Activated T-helper 1 cell treated with anti-CD3 and anti-CD28 coated beads, Interleukin-12 subunit alpha, Interleukin-12 subunit beta, Interleukin-2, Interleukin-4 antibody, amounts not matched to agents 30 ng/mL and 10 ng/mL and 1 ng/mL, durations not matched to agents 14 hours and 24 hours and 36 hours (primary cell): ENCODE measurements at regions of chr1 and their contacts with region 1.

Region 1: GRCh38 chr1:150561974-150562445 is 12.8 kb downstream of the ADAMTSL4 start:
- DNase-seq: peak; percentile 91
- H3K4me3 Mint-ChIP-seq: peak overlapping the region; percentile 98
- H3K27ac Mint-ChIP-seq: peak overlapping the region; percentile 98
- H3K4me1 Mint-ChIP-seq: peaks cover 64% of the 10 kb centered on the region
- H3K27me3 Mint-ChIP-seq: no peaks in the 10 kb centered on the region

Region 2: DNA sequence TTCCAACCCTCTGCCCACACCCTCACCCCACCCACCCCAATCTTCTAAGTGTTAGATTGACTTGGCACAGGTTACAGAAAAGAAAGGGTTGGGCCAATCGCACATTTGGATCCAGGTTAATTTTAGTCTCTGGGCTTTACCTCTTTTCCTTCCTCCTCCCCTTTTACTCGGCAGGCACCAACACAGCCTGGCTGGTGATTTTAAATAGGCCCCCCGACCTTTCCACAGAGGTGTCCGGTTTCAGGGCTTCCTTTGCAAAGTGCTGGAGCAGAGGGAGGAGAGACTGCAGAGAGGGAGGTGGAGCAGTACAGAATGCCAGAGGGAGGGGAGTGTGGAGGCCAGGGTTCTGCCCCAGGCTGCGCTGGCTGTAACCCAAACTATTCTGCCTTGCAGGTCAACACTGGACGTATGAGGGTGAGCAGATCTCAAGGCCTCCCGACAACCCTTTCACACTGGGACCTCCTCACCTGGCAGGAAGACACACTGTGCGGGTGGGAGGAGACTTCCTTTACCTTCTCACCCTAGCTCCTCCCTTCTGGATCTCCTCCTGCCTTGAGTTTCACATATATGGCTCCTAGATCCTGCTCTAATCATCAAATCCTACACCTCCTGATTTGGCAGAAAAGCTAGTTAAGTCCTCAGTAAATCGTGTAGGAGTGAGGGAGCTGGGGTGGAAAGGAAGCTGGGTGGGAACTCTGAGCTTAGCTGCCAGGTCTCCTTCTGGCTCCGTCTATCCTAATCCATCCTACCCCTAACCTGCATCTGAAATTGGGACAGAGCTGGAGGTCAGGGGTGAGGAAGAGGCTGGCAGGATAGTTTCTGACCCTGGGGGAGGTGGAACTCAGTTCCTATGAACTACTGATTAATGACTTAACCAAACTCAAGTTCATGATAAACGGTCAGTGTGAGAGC is 302.0 kb before region 1 on chr1:
- intact Hi-C with region 1: loop called (anchors 1 kb)
- DNase-seq: no peak
- H3K4me3 Mint-ChIP-seq: no peak overlapping the region
- H3K27ac Mint-ChIP-seq: no peak overlapping the region
- H3K4me1 Mint-ChIP-seq: peaks cover 19% of the 10 kb centered on the region
- H3K27me3 Mint-ChIP-seq: peaks cover 37% of the 10 kb centered on the region

Region 3: GRCh38 chr1:150578965-150579798 is 17.2 kb after region 1 on chr1 and contains the start of gene MCL1:
- intact Hi-C with region 1: loop called (anchors 1 kb)
- DNase-seq: peak; percentile 92
- H3K4me3 Mint-ChIP-seq: peak within 1 kb of the TSS; percentile 95
- H3K27ac Mint-ChIP-seq: peak within 1 kb of the TSS; percentile 97
- H3K4me1 Mint-ChIP-seq: peaks cover 35% of the 10 kb centered on the region
- H3K27me3 Mint-ChIP-seq: peaks cover 2% of the 10 kb centered on the region
- total RNA-seq, gene MCL1: 311 and 317 TPM in 2 replicates

Region 4: GRCh38 chr1:150629115-150629928 is 67.3 kb after region 1 on chr1 and contains the start of gene ENSA:
- intact Hi-C with region 1: loop called (anchors 1 kb)
- DNase-seq: peak; percentile 94
- H3K4me3 Mint-ChIP-seq: no peak within 1 kb of the TSS
- H3K27ac Mint-ChIP-seq: no peak within 1 kb of the TSS
- H3K4me1 Mint-ChIP-seq: peaks cover 43% of the 10 kb centered on the region
- H3K27me3 Mint-ChIP-seq: peaks cover 1% of the 10 kb centered on the region
- total RNA-seq, gene ENSA: 282 and 285 TPM in 2 replicates

Region 5: GRCh38 chr1:150775276-150775675 is 213.3 kb after region 1 on chr1:
- intact Hi-C with region 1: no loop called
- DNase-seq: no peak
- H3K4me3 Mint-ChIP-seq: no peak overlapping the region
- H3K27ac Mint-ChIP-seq: no peak overlapping the region
- H3K4me1 Mint-ChIP-seq: peaks cover 35% of the 10 kb centered on the region
- H3K27me3 Mint-ChIP-seq: peaks cover 10% of the 10 kb centered on the region

Region 6: DNA sequence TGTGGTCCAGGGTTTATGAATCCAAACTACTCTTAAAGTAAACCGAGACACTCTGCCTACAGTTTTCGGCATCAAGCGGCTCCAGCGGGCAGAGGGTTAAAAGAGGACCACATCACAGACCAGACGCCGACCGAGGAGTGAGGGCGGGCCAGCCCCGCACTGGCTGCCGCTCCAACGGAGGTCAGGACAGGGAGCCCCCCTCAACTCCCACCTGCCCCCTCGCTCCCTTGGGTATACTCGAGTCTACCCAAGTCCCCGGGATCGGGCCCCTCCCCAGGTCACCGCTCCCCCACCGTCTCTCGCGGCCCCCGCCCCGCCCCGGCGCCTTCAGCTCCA is 314.1 kb after region 1 on chr1:
- intact Hi-C with region 1: loop called (anchors 1 kb)
- DNase-seq: no peak
- H3K4me3 Mint-ChIP-seq: peak overlapping the region; percentile 86
- H3K27ac Mint-ChIP-seq: peak overlapping the region; percentile 88
- H3K4me1 Mint-ChIP-seq: peaks cover 34% of the 10 kb centered on the region
- H3K27me3 Mint-ChIP-seq: no peaks in the 10 kb centered on the region

Region 7: GRCh38 chr1:151059078-151059907 is 497.3 kb after region 1 on chr1 and contains the start of gene CDC42SE1:
- intact Hi-C with region 1: loop called (anchors 5 kb)
- DNase-seq: peak; percentile 81
- H3K4me3 Mint-ChIP-seq: peak within 1 kb of the TSS; percentile 95
- H3K27ac Mint-ChIP-seq: peak within 1 kb of the TSS; percentile 97
- H3K4me1 Mint-ChIP-seq: peaks cover 65% of the 10 kb centered on the region
- H3K27me3 Mint-ChIP-seq: no peaks in the 10 kb centered on the region
- total RNA-seq, gene CDC42SE1: 216 and 219 TPM in 2 replicates